K562 (cell line): ENCODE measurements at regions of chr22 and their contacts with region 1.

Region 1: GRCh38 chr22:19214078-19214473 is 35.5 kb upstream of the SLC25A1 start:
- DNase-seq: peak in 1 of 4 experiments; percentile 38
- ATAC-seq: no peak
- H3K4me3 ChIP-seq: no peak overlapping the region
- H3K27ac ChIP-seq: no peak overlapping the region
- H3K4me1 ChIP-seq: peaks cover 9 to 13% of the 10 kb centered on the region in 2 experiments
- H3K27me3 ChIP-seq: peaks cover 30 to 37% of the 10 kb centered on the region in 2 experiments
- CTCF ChIP-seq: no peak
- EP300 ChIP-seq: no peak
- POLR2A ChIP-seq: no peak
- RAD21 ChIP-seq: 0 out of 4 replicates have a peak, but pooled peaks of 1 of the 2 experiments have one; percentile 9

Region 2: DNA sequence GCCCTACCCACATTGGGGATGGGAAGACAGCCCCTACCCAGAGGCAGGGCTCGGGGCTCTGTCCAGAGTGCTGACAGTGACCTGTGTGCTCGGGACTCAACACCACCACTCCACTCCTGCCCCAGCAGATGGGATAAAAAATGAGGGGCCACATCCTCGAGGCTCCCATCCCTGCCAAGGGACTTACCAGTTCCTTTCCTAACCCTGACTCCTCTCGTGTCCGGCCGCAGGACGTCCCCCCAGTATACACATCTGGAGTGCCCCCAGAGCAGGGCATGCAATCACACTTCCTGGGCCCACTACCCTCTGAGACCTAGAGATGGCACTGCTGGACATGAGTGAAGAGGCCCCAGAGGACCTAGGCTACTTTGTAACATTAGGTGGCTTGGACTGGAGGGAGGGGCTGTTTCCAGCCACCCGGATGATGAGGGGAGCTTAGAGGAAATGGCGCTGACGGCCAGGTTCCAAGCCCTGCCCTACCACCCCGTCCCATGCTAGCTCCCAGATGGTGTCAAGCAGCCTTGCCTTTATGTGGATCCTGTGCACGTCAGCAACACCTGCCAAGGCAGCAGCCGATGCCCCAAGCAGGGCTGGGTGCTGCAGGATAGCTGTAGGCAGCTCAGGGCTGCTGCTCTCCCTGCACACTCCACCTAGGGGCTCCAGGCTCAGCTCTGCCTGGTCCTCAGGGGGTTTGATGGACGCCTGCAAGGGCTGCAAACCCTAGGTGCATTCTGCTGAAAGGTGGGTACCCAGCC is 178.4 kb before region 1 on chr22:
- CTCF ChIA-PET with region 1: no interaction called
- POLR2A ChIA-PET with region 1: no interaction called
- in situ Hi-C with region 1: no loop called
- intact Hi-C with region 1: no loop called
- DNase-seq: peak; percentile 64 to 76 (median 69)
- ATAC-seq: peak; percentile 62
- H3K4me3 ChIP-seq: no peak overlapping the region
- H3K27ac ChIP-seq: no peak overlapping the region
- H3K4me1 ChIP-seq: peaks cover 0 to 27% of the 10 kb centered on the region in 2 experiments; a peak in 1 of 5 replicates
- H3K27me3 ChIP-seq: peaks cover 13 to 26% of the 10 kb centered on the region in 2 experiments; a peak in 4 of 5 replicates
- CTCF ChIP-seq: peak; percentile 39 to 63 (median 55); a peak in 5 of 6 replicates
- EP300 ChIP-seq: no peak
- POLR2A ChIP-seq: peak; percentile 72
- RAD21 ChIP-seq: peak in 1 of 2 experiments; percentile 57; a peak in 2 of 4 replicates

Region 3: DNA sequence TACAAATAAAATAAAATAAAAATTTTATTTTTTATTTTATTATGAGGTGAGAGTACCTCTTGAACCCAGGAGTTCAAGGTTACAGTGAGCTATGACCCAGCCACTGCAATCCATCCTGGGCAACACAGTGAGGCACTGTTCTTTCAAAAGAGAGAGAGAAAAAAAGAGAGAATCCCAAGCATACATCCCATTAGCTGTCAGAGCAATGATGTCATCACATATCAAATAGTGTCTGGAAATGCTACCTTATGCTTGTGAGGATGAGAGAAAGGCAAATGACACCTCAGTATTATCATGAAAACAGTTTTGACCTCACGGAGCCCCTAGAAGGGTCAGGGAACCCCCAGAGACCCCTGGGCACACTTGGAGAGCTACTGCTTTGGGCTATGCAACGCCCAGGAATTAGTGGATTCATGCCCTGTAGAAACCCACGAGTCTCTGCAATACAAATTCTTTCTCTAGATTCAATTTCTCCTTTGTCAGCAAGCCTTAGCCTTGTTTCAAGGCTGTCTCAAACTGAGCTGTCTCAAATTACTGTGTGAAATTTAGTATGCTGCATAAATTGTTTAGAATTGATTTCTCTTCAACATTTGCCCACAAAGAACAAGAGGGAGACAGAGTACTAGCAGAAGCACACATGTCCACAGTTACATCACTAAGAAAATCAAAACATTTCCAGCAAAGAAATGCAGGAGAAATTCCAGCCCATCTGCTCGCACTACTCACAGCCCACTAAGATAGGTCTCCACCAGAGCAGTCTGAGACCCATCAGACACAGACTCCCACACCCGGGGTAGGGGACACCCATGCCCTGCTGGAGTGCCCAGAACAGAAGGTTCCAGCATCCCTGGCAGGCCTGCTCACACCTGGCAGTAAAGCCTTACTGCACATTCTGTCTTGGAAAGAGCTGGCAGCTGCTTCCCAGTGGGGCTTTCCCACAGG is 109.9 kb before region 1 on chr22:
- CTCF ChIA-PET with region 1: no interaction called
- POLR2A ChIA-PET with region 1: no interaction called
- in situ Hi-C with region 1: no loop called
- intact Hi-C with region 1: no loop called
- DNase-seq: peak in 2 of 4 experiments; percentile 22 to 51
- ATAC-seq: peak; percentile 8; the same call in 1 of the 3 replicates
- H3K4me3 ChIP-seq: no peak overlapping the region
- H3K27ac ChIP-seq: no peak overlapping the region
- H3K4me1 ChIP-seq: peaks cover 18 to 19% of the 10 kb centered on the region in 2 experiments
- H3K27me3 ChIP-seq: no peaks in the 10 kb centered on the region
- CTCF ChIP-seq: peak; percentile 10 to 30 (median 16); a peak in 3 of 6 replicates
- EP300 ChIP-seq: no peak
- POLR2A ChIP-seq: no peak
- RAD21 ChIP-seq: no peak

Region 4: GRCh38 chr22:19201869-19202798 is 11.9 kb before region 1 on chr22:
- CTCF ChIA-PET with region 1: interaction called, 5 read pairs
- POLR2A ChIA-PET with region 1: interaction called, 123 read pairs
- in situ Hi-C with region 1: no loop called
- intact Hi-C with region 1: no loop called
- DNase-seq: peak; percentile 79 to 99 (median 93)
- ATAC-seq: peak; percentile 50
- H3K4me3 ChIP-seq: peak overlapping the region; percentile 19
- H3K27ac ChIP-seq: no peak overlapping the region
- H3K4me1 ChIP-seq: peaks cover 14 to 15% of the 10 kb centered on the region in 2 experiments
- H3K27me3 ChIP-seq: peaks cover 59 to 75% of the 10 kb centered on the region in 2 experiments
- CTCF ChIP-seq: peak in 1 of 3 experiments; percentile 5; a peak in 1 of 6 replicates
- EP300 ChIP-seq: no peak
- POLR2A ChIP-seq: no peak
- RAD21 ChIP-seq: no peak

Region 5: DNA sequence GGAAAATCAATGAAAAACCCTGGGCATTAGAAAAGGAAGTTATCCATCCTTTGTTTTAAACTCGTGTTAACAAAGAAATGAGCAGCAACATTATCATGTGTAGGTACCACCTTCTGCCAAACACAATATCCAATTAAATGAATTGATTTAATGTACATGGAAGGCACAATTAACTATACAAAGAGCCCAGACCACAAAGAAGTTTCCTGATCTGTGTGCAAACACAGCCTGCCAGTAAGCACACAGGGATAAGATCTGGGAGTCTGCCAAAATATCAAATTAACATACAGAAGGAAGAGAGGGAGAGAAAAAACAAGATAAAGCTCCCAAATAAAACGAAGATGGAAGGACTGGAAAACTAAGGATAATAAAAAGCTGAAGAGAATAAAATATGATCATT is 18.5 kb after region 1 on chr22:
- CTCF ChIA-PET with region 1: interaction called, 3 read pairs
- POLR2A ChIA-PET with region 1: interaction called, 18 read pairs
- in situ Hi-C with region 1: no loop called
- intact Hi-C with region 1: no loop called
- DNase-seq: no peak
- ATAC-seq: no peak
- H3K4me3 ChIP-seq: no peak overlapping the region
- H3K27ac ChIP-seq: no peak overlapping the region
- H3K4me1 ChIP-seq: peaks cover 0 to 8% of the 10 kb centered on the region in 2 experiments; a peak in 3 of 5 replicates
- H3K27me3 ChIP-seq: peaks cover 50 to 53% of the 10 kb centered on the region in 2 experiments
- CTCF ChIP-seq: no peak
- EP300 ChIP-seq: no peak
- POLR2A ChIP-seq: no peak
- RAD21 ChIP-seq: no peak

Region 6: DNA sequence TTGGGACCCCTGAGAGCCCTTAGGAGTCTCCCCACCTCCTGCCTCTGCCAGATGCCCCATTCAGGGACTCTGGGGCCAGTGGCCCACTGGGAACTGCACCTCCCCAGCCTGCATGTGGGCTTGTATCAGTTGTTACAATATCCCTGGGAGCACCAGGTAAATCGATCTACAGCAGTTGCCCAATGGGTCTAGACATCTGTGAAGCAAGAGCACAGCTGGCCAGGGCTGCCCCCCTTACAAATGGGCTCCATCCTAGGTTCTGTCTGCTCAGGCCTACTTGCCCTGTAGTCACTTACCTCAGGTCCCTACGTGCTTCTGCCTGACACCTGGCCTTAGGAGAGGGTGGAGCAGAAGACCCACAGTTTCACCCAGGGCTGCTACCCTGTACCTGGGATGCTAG is 154.8 kb after region 1 on chr22:
- CTCF ChIA-PET with region 1: no interaction called
- POLR2A ChIA-PET with region 1: no interaction called
- in situ Hi-C with region 1: no loop called
- intact Hi-C with region 1: loop called (anchors 5 kb)
- DNase-seq: no peak
- ATAC-seq: no peak; the same call in 1 of the 3 replicates
- H3K4me3 ChIP-seq: no peak overlapping the region
- H3K27ac ChIP-seq: no peak overlapping the region
- H3K4me1 ChIP-seq: no peaks in the 10 kb centered on the region
- H3K27me3 ChIP-seq: no peaks in the 10 kb centered on the region
- CTCF ChIP-seq: no peak
- EP300 ChIP-seq: no peak
- POLR2A ChIP-seq: no peak
- RAD21 ChIP-seq: no peak